ENCODE measurements at regions of chr13 and their contacts with region 1.

Region 1: GRCh38 chr13:27860743-27861142 is 59.1 kb upstream of the PDX1 start:
- DNase-seq: no peak
- H3K4me3 ChIP-seq: no peak overlapping the region
- H3K27ac ChIP-seq: no peak overlapping the region
- H3K4me1 ChIP-seq: no peaks in the 10 kb centered on the region
- H3K27me3 ChIP-seq: peaks cover 75% of the 10 kb centered on the region
- CTCF ChIP-seq: no peak
- EP300 ChIP-seq: no peak
- POLR2A ChIP-seq: no peak

Region 2: GRCh38 chr13:26752669-26753068 is 1108.1 kb before region 1 on chr13:
- in situ Hi-C with region 1: no loop called
- intact Hi-C with region 1: loop called (anchors 5 kb)
- DNase-seq: no peak
- H3K4me3 ChIP-seq: no peak overlapping the region
- H3K27ac ChIP-seq: no peak overlapping the region
- H3K4me1 ChIP-seq: no peaks in the 10 kb centered on the region
- H3K27me3 ChIP-seq: peaks cover 49% of the 10 kb centered on the region
- CTCF ChIP-seq: no peak
- EP300 ChIP-seq: no peak
- POLR2A ChIP-seq: no peak

Region 3: GRCh38 chr13:27783111-27783510 is 77.6 kb before region 1 on chr13:
- in situ Hi-C with region 1: no loop called
- intact Hi-C with region 1: no loop called
- DNase-seq: no peak
- H3K4me3 ChIP-seq: no peak overlapping the region
- H3K27ac ChIP-seq: no peak overlapping the region
- H3K4me1 ChIP-seq: no peaks in the 10 kb centered on the region
- H3K27me3 ChIP-seq: peaks cover 61% of the 10 kb centered on the region
- CTCF ChIP-seq: no peak
- EP300 ChIP-seq: no peak
- POLR2A ChIP-seq: no peak

Measured in transverse colon (tissue), 4 donors.